Activated CD4-positive, alpha-beta T cell treated with anti-CD3 and anti-CD28 coated beads for 36 hours (primary cell): ENCODE measurements at regions of chr1 and their contacts with region 1.

Region 1: DNA sequence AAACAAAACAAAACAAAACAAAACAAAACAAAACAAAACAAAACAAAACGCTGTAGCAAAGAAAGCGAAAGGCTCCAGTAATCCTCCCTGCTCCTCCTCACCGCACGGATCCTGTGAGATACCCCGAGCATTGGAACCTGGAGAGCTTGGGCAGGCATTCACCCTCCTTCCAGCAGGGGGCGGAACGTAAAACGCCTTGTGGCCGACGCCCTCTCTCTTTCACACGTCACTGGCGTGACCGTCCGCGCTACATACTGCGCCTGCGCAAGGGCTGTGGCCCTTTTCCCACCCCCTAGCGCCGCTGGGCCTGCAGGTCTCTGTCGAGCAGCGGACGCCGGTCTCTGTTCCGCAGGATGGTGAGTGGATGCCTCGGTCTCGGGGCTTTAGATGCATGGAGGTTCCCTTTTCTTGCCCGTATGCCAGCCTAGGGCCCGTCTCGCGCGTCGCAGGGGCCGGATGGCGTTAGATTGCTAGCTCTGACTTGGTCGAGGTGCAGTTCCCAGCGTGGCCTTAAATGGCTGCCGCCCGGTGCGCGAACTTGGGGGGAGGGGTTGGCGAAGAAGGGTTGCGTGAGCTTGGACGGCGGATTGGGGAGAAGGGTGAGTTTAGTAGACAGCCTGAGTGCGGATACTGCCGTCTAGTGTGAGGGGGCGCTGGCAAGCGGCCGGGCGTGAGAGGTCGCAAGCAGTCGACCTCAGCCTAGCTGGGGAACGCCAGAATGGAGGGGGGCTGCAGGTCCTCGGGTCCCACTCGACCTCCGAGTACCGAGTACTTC is at the start of gene RPL5:
- DNase-seq: peak; percentile 98
- ATAC-seq: peak; percentile 88
- H3K4me3 Mint-ChIP-seq: peak within 1 kb of the TSS; percentile 84
- H3K27ac Mint-ChIP-seq: peak within 1 kb of the TSS; percentile 95
- H3K4me1 Mint-ChIP-seq: peaks cover 35% of the 10 kb centered on the region
- H3K27me3 Mint-ChIP-seq: no peaks in the 10 kb centered on the region
- total RNA-seq, gene RPL5: 1,359 to 1,602 TPM

Region 2: GRCh38 chr1:92298573-92299476 is 533.1 kb before region 1 on chr1 and contains the starts of genes GLMN and RPAP2:
- CTCF ChIA-PET with region 1: no interaction called
- POLR2A ChIA-PET with region 1: no interaction called
- intact Hi-C with region 1: loop called in 1 of 2 experiments (anchors 5 kb)
- DNase-seq: peak; percentile 83
- ATAC-seq: peak; percentile 98
- H3K4me3 Mint-ChIP-seq: peak within 1 kb of the TSS; percentile 84
- H3K27ac Mint-ChIP-seq: peak within 1 kb of the TSS; percentile 94
- H3K4me1 Mint-ChIP-seq: peaks cover 31% of the 10 kb centered on the region
- H3K27me3 Mint-ChIP-seq: no peaks in the 10 kb centered on the region
- total RNA-seq, gene GLMN: 10.8 to 17.6 TPM
- total RNA-seq, gene RPAP2: 33.4 to 39.0 TPM

Region 3: DNA sequence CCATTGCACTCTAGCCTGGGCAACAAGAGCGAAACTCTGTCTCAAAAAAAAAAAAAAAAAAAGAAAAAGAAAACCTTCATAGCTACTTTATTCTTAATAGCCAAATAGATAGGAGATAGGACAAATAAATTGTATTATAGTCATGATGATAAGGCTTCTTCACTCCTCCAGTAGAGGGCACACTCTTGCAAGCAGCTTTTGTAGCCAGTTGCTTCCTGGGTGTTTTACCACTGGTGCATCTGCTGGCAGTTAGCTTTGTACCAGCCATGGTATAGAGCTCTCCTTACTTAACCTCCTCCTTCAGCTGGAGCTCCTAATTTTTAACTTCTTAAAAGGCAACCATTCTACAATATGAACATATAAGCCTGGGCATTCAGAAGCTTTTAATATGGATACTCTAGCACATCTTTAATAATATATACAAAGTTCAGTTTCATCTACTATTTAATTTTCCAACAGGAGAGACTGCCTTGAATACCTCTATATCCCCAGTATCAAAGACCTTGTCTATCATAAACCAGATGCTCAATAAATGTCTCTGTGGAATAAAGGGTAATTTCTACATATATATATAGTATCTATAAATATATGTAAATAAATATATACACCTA is 82.8 kb before region 1 on chr1:
- CTCF ChIA-PET with region 1: interaction called, 10 read pairs
- POLR2A ChIA-PET with region 1: no interaction called
- intact Hi-C with region 1: loop called in 1 of 2 experiments (anchors 5 kb)
- DNase-seq: peak; percentile 55
- ATAC-seq: peak; percentile 76
- H3K4me3 Mint-ChIP-seq: no peak overlapping the region
- H3K27ac Mint-ChIP-seq: no peak overlapping the region
- H3K4me1 Mint-ChIP-seq: no peaks in the 10 kb centered on the region
- H3K27me3 Mint-ChIP-seq: no peaks in the 10 kb centered on the region

Region 4: DNA sequence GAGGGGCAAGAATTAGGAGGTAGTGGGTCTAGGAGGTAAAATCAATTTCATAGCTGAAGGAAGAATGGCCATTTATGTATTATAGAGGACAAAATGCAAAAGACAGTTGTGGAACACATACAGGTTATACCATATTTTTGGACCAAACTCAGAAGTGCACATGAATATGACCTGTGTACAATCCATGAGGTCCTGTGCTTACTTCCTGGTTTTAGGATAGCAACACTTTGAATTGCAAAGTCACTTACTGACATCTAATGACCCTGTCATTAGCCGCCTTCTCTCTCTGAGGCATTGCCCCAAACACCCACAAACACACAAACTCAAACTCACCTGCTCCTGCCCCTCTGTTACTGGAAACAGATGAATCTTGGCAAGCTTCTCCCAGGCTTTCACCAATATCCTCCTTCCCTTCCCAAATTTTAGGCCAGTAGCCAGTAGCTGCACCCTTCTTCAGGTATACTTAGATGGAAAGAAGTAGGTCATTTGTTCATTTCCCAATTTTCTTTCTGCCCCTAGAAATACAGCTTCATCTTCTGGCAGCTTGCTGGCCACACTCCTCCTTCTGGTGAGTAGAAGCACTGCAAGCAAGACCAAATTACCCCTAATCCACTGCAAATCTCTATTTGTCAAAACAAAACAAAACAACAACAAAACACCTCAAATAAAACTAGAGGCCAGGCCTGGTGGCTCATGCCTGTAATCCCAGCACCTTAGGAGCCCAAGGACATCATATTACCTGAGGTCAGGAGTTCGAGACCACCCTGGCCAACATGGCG is 13.8 kb before region 1 on chr1:
- CTCF ChIA-PET with region 1: interaction called, 26 read pairs
- POLR2A ChIA-PET with region 1: no interaction called
- intact Hi-C with region 1: no loop called
- DNase-seq: peak; percentile 33
- ATAC-seq: no peak
- H3K4me3 Mint-ChIP-seq: no peak overlapping the region
- H3K27ac Mint-ChIP-seq: no peak overlapping the region
- H3K4me1 Mint-ChIP-seq: no peaks in the 10 kb centered on the region
- H3K27me3 Mint-ChIP-seq: peaks cover 9% of the 10 kb centered on the region

Region 5: GRCh38 chr1:92877792-92878191 is 45.8 kb after region 1 on chr1:
- CTCF ChIA-PET with region 1: no interaction called
- POLR2A ChIA-PET with region 1: no interaction called
- intact Hi-C with region 1: no loop called
- DNase-seq: no peak
- ATAC-seq: peak; percentile 60
- H3K4me3 Mint-ChIP-seq: peak overlapping the region; percentile 56
- H3K27ac Mint-ChIP-seq: peak overlapping the region; percentile 83
- H3K4me1 Mint-ChIP-seq: peaks cover 33% of the 10 kb centered on the region
- H3K27me3 Mint-ChIP-seq: no peaks in the 10 kb centered on the region

Region 6: DNA sequence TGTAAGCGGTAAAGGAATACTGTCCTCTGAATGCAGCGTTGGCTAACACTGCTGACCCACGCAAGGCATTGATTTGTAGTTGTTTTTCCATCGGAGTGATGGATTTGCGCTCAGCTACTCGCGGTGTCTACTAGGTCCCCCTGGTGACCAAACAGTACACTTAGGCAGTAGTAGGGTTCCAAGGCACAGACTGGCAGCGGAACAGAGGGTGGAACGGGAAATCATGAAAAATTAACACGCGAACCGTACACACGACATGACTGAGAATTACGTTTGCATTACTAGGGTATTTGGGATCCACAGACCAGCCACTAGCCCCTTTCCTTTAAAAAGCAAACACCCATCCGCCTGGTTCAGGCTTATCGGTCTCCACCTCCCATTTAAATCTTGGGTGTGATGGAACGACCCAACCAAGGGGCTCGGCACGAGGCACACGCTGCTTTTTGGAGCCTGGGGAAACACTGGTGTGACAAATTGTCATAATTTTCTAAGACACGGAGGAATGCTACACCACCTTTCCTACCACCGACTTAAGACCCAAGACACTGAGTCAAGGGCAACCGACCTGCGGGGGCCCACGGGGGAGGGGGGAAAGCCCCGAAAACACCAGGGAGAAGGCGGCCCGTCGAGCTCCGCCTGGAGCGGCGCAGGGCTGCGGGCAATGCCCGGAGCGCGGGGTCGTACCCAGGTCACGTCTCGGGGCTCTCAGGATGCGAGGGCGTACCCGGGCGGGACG is 128.6 kb after region 1 on chr1:
- CTCF ChIA-PET with region 1: interaction called, 7 read pairs
- POLR2A ChIA-PET with region 1: interaction called, 3 read pairs
- intact Hi-C with region 1: loop called (anchors 1 to 2 kb)
- DNase-seq: peak; percentile 78
- ATAC-seq: peak; percentile 62
- H3K4me3 Mint-ChIP-seq: peak overlapping the region; percentile 94
- H3K27ac Mint-ChIP-seq: peak overlapping the region; percentile 95
- H3K4me1 Mint-ChIP-seq: peaks cover 36% of the 10 kb centered on the region
- H3K27me3 Mint-ChIP-seq: no peaks in the 10 kb centered on the region

Region 7: DNA sequence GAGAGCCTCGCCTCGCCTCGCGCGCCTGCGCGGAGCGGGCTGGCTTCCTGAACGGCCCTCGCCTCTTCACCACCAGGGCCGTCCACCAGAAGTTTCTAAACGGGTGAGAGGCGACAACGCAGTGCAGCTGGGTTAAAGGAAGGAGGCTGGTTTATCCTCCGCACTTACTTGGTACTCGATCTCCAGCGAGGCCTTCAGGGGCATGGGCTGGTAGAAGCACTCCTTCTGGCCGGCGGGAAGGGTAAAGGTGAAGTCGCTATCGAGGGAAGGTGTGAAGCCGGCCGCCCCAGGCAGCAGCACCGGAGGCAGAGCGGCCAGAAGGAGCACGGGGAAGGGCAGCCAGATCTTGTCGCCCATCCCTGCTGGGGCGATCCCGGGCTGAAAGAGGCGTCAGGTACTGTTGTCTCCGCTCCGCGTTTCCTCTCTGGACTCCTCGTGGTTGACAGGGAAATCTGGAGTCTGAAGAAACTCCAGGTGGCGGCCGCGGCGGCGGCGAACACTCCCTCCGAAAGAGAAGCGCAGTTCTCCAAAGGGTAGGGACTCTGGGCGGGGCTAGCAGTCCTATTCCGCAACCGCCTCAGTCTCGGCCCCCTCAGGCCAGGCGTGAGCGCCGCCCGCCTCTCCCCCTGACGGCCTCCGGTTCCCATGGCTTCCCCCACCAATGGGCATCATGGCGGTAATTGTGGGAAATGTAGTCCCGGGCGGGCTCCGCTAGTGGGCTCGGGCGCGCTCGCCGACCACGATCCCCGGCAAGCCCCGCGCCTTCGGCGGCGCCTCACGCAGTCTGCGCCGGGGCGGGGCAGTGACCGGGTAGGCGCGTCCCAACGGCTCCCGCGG is 348.2 kb after region 1 on chr1 and contains the start of gene TMED5:
- CTCF ChIA-PET with region 1: no interaction called
- POLR2A ChIA-PET with region 1: no interaction called
- intact Hi-C with region 1: loop called in 1 of 2 experiments (anchors 1 kb)
- DNase-seq: peak; percentile 98
- ATAC-seq: peak; percentile 85
- H3K4me3 Mint-ChIP-seq: peak within 1 kb of the TSS; percentile 89
- H3K27ac Mint-ChIP-seq: peak within 1 kb of the TSS; percentile 99
- H3K4me1 Mint-ChIP-seq: peaks cover 41% of the 10 kb centered on the region
- H3K27me3 Mint-ChIP-seq: no peaks in the 10 kb centered on the region
- total RNA-seq, gene TMED5: 32.6 to 33.0 TPM

Region 8: DNA sequence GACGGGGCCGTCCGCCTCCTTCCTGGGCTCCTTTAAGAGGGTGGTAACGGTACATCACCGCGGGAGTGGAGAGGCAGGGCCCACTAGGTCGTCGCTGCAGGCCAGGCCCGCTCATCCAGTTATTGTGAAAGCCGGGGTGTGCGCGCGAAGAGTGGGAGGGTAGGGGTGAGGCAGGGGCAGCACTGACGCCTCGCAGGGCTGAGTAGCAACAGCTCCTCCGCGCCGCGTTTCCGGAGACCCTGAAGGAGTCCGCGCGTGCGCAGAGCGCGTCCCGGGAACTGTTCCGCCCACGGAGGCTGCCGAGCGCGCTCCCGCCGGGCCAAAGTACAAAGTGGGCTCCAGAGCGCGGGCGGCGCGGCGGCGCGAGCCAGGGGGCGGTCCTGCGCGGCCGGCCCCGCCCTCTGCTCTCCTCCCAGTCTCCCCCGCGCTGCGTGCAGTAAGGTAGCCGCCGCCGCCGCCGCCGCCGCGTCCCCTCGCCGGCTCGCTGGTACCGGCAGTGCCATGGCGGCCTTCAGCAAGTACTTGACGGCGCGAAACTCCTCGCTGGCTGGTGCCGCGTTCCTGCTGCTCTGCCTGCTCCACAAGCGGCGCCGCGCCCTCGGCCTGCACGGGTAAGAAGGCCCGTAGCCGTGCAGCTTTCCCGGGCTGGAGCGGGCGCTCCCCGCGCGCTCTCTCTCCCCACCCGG is 1586.2 kb after region 1 on chr1 and contains the start of gene ABCD3:
- CTCF ChIA-PET with region 1: no interaction called
- POLR2A ChIA-PET with region 1: no interaction called
- intact Hi-C with region 1: loop called in 1 of 2 experiments (anchors 5 kb)
- DNase-seq: peak; percentile 98
- ATAC-seq: peak; percentile 91
- H3K4me3 Mint-ChIP-seq: no peak within 1 kb of the TSS
- H3K27ac Mint-ChIP-seq: peak within 1 kb of the TSS; percentile 87
- H3K4me1 Mint-ChIP-seq: peaks cover 29% of the 10 kb centered on the region
- H3K27me3 Mint-ChIP-seq: peaks cover 6% of the 10 kb centered on the region
- total RNA-seq, gene ABCD3: 46.1 to 67.1 TPM